HepG2 (cell line): ENCODE measurements at regions of chr20 and their contacts with region 1.

Region 1: GRCh38 chr20:53660078-53660909 is 66.7 kb upstream of the ZNF217 start:
- DNase-seq: no peak
- ATAC-seq: no peak
- H3K4me3 ChIP-seq: peak overlapping the region in 2 of 3 experiments; percentile 6 to 7; a peak in 2 of 6 replicates
- H3K27ac ChIP-seq: peak overlapping the region; percentile 9
- H3K4me1 ChIP-seq: peaks cover 55% of the 10 kb centered on the region
- H3K27me3 ChIP-seq: no peaks in the 10 kb centered on the region
- CTCF ChIP-seq: no peak
- EP300 ChIP-seq: no peak
- POLR2A ChIP-seq: no peak
- RAD21 ChIP-seq: no peak

Region 2: GRCh38 chr20:53643031-53643832 is 17.1 kb before region 1 on chr20:
- CTCF ChIA-PET with region 1: no interaction called
- POLR2A ChIA-PET with region 1: interaction called, 14 read pairs
- in situ Hi-C with region 1: no loop called
- intact Hi-C with region 1: no loop called
- DNase-seq: no peak
- ATAC-seq: peak; percentile 77
- H3K4me3 ChIP-seq: peak overlapping the region; percentile 34 to 64 (median 48); a peak in 5 of 6 replicates
- H3K27ac ChIP-seq: peak overlapping the region; percentile 93
- H3K4me1 ChIP-seq: peaks cover 81% of the 10 kb centered on the region
- H3K27me3 ChIP-seq: no peaks in the 10 kb centered on the region
- CTCF ChIP-seq: no peak
- EP300 ChIP-seq: no peak; a peak in 1 of 4 replicates
- POLR2A ChIP-seq: peak in 1 of 2 experiments; percentile 77; a peak in 2 of 4 replicates
- RAD21 ChIP-seq: no peak

Region 3: DNA sequence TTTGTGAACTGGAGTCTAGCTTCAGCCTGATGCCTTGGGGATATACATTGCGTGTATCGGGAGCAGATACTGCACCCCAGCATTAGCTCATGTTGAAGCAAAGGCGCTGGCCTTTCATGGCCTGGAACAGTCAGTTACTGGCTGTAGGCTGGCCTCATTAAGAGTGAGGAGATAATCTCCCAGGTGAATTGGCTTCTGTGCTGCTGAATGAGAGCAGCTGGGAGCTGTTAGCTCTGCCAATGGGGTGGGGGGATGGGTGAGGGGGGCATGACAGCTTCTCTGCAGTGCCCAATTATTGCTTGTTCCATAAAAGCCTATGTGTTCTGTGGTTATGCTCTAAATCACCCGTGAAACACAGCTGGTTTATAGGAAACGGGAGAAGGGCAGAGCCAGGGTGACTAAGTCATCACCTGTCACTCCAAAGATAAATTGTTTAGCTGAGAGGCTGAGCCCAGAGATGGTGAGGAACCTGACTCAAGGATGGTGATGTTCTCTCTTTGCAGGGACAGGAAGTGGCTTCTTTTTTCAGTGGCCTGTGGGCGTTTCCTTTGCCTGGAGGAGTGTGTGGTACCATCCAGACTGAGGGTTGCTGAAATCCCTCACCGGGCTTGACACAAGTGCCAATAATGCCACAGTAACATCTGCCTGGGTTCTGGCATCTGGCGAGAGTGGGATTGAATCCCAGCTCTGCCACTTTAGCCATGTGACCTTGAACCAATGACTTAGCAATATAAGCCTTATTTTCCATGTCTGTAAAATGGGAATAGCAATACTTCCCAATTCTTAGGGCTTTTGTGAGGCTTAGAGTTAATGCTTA is 239.3 kb after region 1 on chr20:
- CTCF ChIA-PET with region 1: no interaction called
- POLR2A ChIA-PET with region 1: no interaction called
- in situ Hi-C with region 1: no loop called
- intact Hi-C with region 1: no loop called
- DNase-seq: no peak
- ATAC-seq: peak; percentile 38; the same call in 2 of the 3 replicates
- H3K4me3 ChIP-seq: no peak overlapping the region
- H3K27ac ChIP-seq: no peak overlapping the region
- H3K4me1 ChIP-seq: peaks cover 34% of the 10 kb centered on the region
- H3K27me3 ChIP-seq: peaks cover 1 to 10% of the 10 kb centered on the region in 2 experiments; a peak in 2 of 5 replicates
- CTCF ChIP-seq: no peak
- EP300 ChIP-seq: no peak
- POLR2A ChIP-seq: no peak
- RAD21 ChIP-seq: no peak